Activated T-helper 2 cell treated with anti-CD3 and anti-CD28 coated beads, Interferon-gamma antibody, Interleukin-2, Interleukin-4, amounts not matched to agents 10 μg/mL and 5 μg/mL and 100 μg/mL, durations not matched to agents 14 hours and 24 hours and 36 hours (primary cell): ENCODE measurements at regions of chr6 and their contacts with region 1.

Region 1: GRCh38 chr6:149925974-149926777 is 3.3 kb upstream of the RAET1G start:
- DNase-seq: peak; percentile 65
- H3K4me3 Mint-ChIP-seq: peak overlapping the region; percentile 55
- H3K27ac Mint-ChIP-seq: no peak overlapping the region
- H3K4me1 Mint-ChIP-seq: peaks cover 18% of the 10 kb centered on the region
- H3K27me3 Mint-ChIP-seq: peaks cover 83% of the 10 kb centered on the region

Region 2: GRCh38 chr6:149723771-149724417 is 202.3 kb before region 1 on chr6:
- intact Hi-C with region 1: loop called (anchors 10 kb)
- DNase-seq: peak; percentile 43
- H3K4me3 Mint-ChIP-seq: no peak overlapping the region
- H3K27ac Mint-ChIP-seq: no peak overlapping the region
- H3K4me1 Mint-ChIP-seq: peaks cover 26% of the 10 kb centered on the region
- H3K27me3 Mint-ChIP-seq: no peaks in the 10 kb centered on the region

Region 3: GRCh38 chr6:149834513-149835481 is 91.4 kb before region 1 on chr6:
- intact Hi-C with region 1: loop called (anchors 1 kb)
- DNase-seq: peak; percentile 62
- H3K4me3 Mint-ChIP-seq: no peak overlapping the region
- H3K27ac Mint-ChIP-seq: no peak overlapping the region
- H3K4me1 Mint-ChIP-seq: no peaks in the 10 kb centered on the region
- H3K27me3 Mint-ChIP-seq: peaks cover 8% of the 10 kb centered on the region

Region 4: GRCh38 chr6:149863697-149864577 is 62.2 kb before region 1 on chr6 and contains the start of gene LRP11:
- intact Hi-C with region 1: loop called (anchors 1 kb)
- DNase-seq: peak; percentile 78
- H3K4me3 Mint-ChIP-seq: peak within 1 kb of the TSS; percentile 83
- H3K27ac Mint-ChIP-seq: no peak within 1 kb of the TSS
- H3K4me1 Mint-ChIP-seq: peaks cover 5% of the 10 kb centered on the region
- H3K27me3 Mint-ChIP-seq: peaks cover 32% of the 10 kb centered on the region
- total RNA-seq, gene LRP11: 3.6 and 4.3 TPM in 2 replicates

Region 5: DNA sequence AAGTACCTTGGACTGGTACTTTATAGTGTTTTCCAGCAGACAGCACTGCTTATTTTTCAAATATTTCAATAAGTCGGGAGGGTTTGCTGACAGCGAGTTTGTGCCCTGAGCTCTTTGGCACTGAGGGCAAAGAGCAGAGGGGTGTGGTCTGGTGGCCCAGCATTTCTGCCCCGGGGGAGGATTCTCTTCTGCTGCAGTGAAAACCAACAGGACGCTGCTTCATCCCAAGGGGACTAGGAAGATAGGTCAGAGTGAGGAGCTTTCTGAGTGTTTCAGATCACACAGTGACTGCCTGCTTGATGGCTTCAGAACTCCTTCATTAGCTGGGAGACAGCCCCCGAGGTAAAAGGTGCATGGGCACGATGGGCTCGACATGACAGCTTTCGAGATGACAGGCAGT is 24.2 kb after region 1 on chr6:
- intact Hi-C with region 1: no loop called
- DNase-seq: no peak
- H3K4me3 Mint-ChIP-seq: no peak overlapping the region
- H3K27ac Mint-ChIP-seq: no peak overlapping the region
- H3K4me1 Mint-ChIP-seq: peaks cover 5% of the 10 kb centered on the region
- H3K27me3 Mint-ChIP-seq: peaks cover 67% of the 10 kb centered on the region